Sigmoid colon (tissue), 7 donors: ENCODE measurements at regions of chr10 and their contacts with region 1.

Region 1: GRCh38 chr10:92880233-92880861 is 32.0 kb downstream of the EXOC6 start:
- DNase-seq: no peak
- H3K4me3 ChIP-seq: no peak overlapping the region
- H3K27ac ChIP-seq: no peak overlapping the region
- H3K4me1 ChIP-seq: peaks cover 0 to 11% (median 0%) of the 10 kb centered on the region in 4 donors
- H3K27me3 ChIP-seq: no peaks in the 10 kb centered on the region
- CTCF ChIP-seq: peak in 2 of 4 experiments; percentile 11 to 44
- EP300 ChIP-seq: no peak
- POLR2A ChIP-seq: no peak

Region 2: GRCh38 chr10:92517034-92517655 is 363.2 kb before region 1 on chr10:
- intact Hi-C with region 1: loop called (anchors 2 kb)
- DNase-seq: peak; percentile 76
- H3K4me3 ChIP-seq: no peak overlapping the region
- H3K27ac ChIP-seq: no peak overlapping the region
- H3K4me1 ChIP-seq: no peaks in the 10 kb centered on the region
- H3K27me3 ChIP-seq: no peaks in the 10 kb centered on the region
- CTCF ChIP-seq: peak; percentile 35 to 69 (median 66)
- EP300 ChIP-seq: no peak
- POLR2A ChIP-seq: no peak

Region 3: GRCh38 chr10:92573798-92574547 is 306.4 kb before region 1 on chr10 and contains the start of gene IDE:
- intact Hi-C with region 1: loop called (anchors 2 kb)
- DNase-seq: peak; percentile 93
- H3K4me3 ChIP-seq: peak within 1 kb of the TSS; percentile 82 to 97 (median 89)
- H3K27ac ChIP-seq: peak within 1 kb of the TSS; percentile 95 to 98 (median 98)
- H3K4me1 ChIP-seq: peaks cover 2 to 40% (median 23%) of the 10 kb centered on the region in 4 donors
- H3K27me3 ChIP-seq: no peaks in the 10 kb centered on the region
- CTCF ChIP-seq: peak; percentile 68 to 86 (median 76)
- EP300 ChIP-seq: no peak
- POLR2A ChIP-seq: peak; percentile 28 to 29
- total RNA-seq, gene IDE: 23.3 to 32.9 (median 28.8) TPM

Region 4: DNA sequence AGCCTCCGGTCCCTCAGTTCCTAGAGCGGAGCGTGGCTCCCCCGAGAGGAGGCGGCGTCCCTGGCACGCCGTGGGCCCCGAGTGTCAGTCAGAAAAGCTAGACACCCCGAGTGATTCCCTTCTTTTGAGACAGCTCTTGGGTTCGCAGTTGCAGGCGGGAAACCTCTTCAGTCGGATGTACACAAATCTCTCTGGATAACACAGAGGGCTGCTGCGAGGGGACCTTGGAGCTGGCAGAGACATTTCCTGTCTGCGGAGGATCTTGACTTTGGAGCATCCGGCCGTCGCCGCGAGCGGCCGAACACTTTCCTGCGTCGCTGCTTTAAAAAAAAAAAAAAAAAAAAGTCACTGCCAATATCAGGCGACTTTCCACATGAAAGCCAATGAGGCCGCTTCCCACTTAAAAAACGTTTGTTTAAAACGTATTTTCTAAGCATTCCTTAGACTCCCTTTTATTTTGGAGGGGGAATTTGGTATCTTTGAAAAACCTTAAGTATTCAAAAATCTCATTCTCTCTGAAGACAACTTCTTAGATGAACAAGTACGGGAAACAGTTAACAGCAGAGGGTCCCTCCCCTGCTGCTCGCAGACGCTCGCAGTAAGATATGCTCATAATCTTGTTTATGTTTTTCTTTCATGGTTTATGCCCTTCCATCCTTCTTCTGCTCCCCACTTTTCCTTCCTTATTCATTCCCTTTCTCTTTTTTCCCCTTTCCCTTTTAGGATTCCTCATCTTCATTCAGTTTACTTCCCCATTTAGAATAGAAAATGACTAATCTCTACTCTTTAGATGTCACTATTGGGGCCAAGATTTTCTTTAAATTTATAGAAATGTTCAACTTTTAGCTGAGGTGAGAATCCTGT is 180.6 kb before region 1 on chr10:
- intact Hi-C with region 1: no loop called
- DNase-seq: no peak
- H3K4me3 ChIP-seq: peak overlapping the region; percentile 18 to 53 (median 44)
- H3K27ac ChIP-seq: peak overlapping the region; percentile 52 to 83 (median 68)
- H3K4me1 ChIP-seq: peaks cover 0 to 18% (median 6%) of the 10 kb centered on the region in 4 donors
- H3K27me3 ChIP-seq: peaks cover 0 to 14% (median 0%) of the 10 kb centered on the region in 3 donors
- CTCF ChIP-seq: no peak
- EP300 ChIP-seq: no peak
- POLR2A ChIP-seq: no peak

Region 5: GRCh38 chr10:92848441-92849233 is 31.7 kb before region 1 on chr10 and contains the start of gene EXOC6:
- intact Hi-C with region 1: loop called (anchors 2 kb)
- DNase-seq: peak; percentile 88
- H3K4me3 ChIP-seq: peak within 1 kb of the TSS; percentile 89 to 99 (median 94)
- H3K27ac ChIP-seq: peak within 1 kb of the TSS; percentile 86 to 90 (median 88)
- H3K4me1 ChIP-seq: peaks cover 0 to 21% (median 12%) of the 10 kb centered on the region in 4 donors
- H3K27me3 ChIP-seq: no peaks in the 10 kb centered on the region
- CTCF ChIP-seq: peak in 1 of 4 experiments; percentile 19
- EP300 ChIP-seq: no peak
- POLR2A ChIP-seq: no peak
- total RNA-seq, gene EXOC6: 16.6 to 20.2 (median 18.9) TPM